Activated CD4-positive, alpha-beta T cell treated with anti-CD3 and anti-CD28 coated beads, Interleukin-2, amount 10 ng/mL, durations not matched to agents 24 days and 14 days (primary cell): ENCODE measurements at regions of chr6 and their contacts with region 1.

Region 1: GRCh38 chr6:36442671-36443470 is at the starts of genes KCTD20 and PXT1:
- DNase-seq: peak; percentile 96
- H3K4me3 Mint-ChIP-seq: peak within 1 kb of the TSS; percentile 96
- H3K27ac Mint-ChIP-seq: peak within 1 kb of the TSS; percentile 98
- H3K4me1 Mint-ChIP-seq: peaks cover 28% of the 10 kb centered on the region
- H3K27me3 Mint-ChIP-seq: no peaks in the 10 kb centered on the region
- total RNA-seq, gene KCTD20: 62.2 and 62.4 TPM in 2 replicates
- total RNA-seq, gene PXT1: 0.09 and 0.30 TPM in 2 replicates

Region 2: GRCh38 chr6:36196880-36197548 is 245.9 kb before region 1 on chr6:
- intact Hi-C with region 1: no loop called
- DNase-seq: peak; percentile 100
- H3K4me3 Mint-ChIP-seq: peak overlapping the region; percentile 95
- H3K27ac Mint-ChIP-seq: peak overlapping the region; percentile 92
- H3K4me1 Mint-ChIP-seq: peaks cover 33% of the 10 kb centered on the region
- H3K27me3 Mint-ChIP-seq: peaks cover 5% of the 10 kb centered on the region

Region 3: GRCh38 chr6:36423101-36423824 is 19.6 kb before region 1 on chr6:
- intact Hi-C with region 1: loop called (anchors 1 kb)
- DNase-seq: peak; percentile 99
- H3K4me3 Mint-ChIP-seq: peak overlapping the region; percentile 88
- H3K27ac Mint-ChIP-seq: peak overlapping the region; percentile 87
- H3K4me1 Mint-ChIP-seq: peaks cover 15% of the 10 kb centered on the region
- H3K27me3 Mint-ChIP-seq: peaks cover 5% of the 10 kb centered on the region

Region 4: GRCh38 chr6:36469148-36469661 is 26.3 kb after region 1 on chr6:
- intact Hi-C with region 1: no loop called
- DNase-seq: no peak
- H3K4me3 Mint-ChIP-seq: no peak overlapping the region
- H3K27ac Mint-ChIP-seq: no peak overlapping the region
- H3K4me1 Mint-ChIP-seq: peaks cover 8% of the 10 kb centered on the region
- H3K27me3 Mint-ChIP-seq: no peaks in the 10 kb centered on the region